SK-N-SH (cell line): ENCODE measurements at regions of chr19 and their contacts with region 1.

Region 1: GRCh38 chr19:41718761-41719160 is 10.3 kb downstream of the CEACAM5 start:
- DNase-seq: no peak
- H3K4me3 ChIP-seq: no peak overlapping the region
- H3K27ac ChIP-seq: no peak overlapping the region
- H3K4me1 ChIP-seq: no peaks in the 10 kb centered on the region
- H3K27me3 ChIP-seq: peaks cover 28% of the 10 kb centered on the region
- CTCF ChIP-seq: no peak
- EP300 ChIP-seq: no peak
- RAD21 ChIP-seq: no peak

Region 2: GRCh38 chr19:41706741-41707501 is 11.8 kb before region 1 on chr19:
- CTCF ChIA-PET with region 1: interaction called, 10 read pairs
- POLR2A ChIA-PET with region 1: no interaction called
- DNase-seq: peak; percentile 79
- H3K4me3 ChIP-seq: peak overlapping the region in 1 of 2 experiments; percentile 41; a peak in 1 of 4 replicates
- H3K27ac ChIP-seq: no peak overlapping the region
- H3K4me1 ChIP-seq: peaks cover 0 to 10% of the 10 kb centered on the region in 2 experiments; a peak in 1 of 4 replicates
- H3K27me3 ChIP-seq: peaks cover 29% of the 10 kb centered on the region
- CTCF ChIP-seq: peak; percentile 77
- EP300 ChIP-seq: no peak
- RAD21 ChIP-seq: no peak